PC-3 (cell line): ENCODE measurements at regions of chr4 and their contacts with region 1.

Region 1: DNA sequence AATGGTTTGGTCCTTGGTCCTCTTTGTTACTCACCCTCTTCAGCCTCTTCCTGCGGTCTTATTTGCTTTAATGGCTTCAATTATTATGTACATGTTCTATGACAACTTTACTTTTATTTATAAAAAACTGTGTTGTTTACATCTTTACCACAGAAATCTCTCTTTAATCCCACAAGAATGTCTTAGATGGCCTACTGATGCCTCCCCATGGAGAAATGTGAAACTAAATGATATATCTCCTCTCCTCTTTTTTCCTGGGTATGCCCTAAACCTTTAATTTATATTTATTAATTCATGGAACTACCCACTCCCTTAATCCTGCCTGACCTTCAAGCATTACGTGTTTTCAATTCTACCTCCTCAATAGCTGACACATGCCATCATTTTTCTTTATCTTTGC is 573.2 kb downstream of the CENPC start:
- DNase-seq: peak; percentile 48
- ATAC-seq: peak; percentile 46; the same call in 1 of the 2 replicates
- H3K4me3 ChIP-seq: no peak overlapping the region
- H3K27ac ChIP-seq: no peak overlapping the region
- H3K4me1 ChIP-seq: peaks cover 13% of the 10 kb centered on the region; the same call in 1 of the 2 replicates
- H3K27me3 ChIP-seq: no peaks in the 10 kb centered on the region
- CTCF ChIP-seq: peak; percentile 44

Region 2: GRCh38 chr4:66777097-66777496 is 195.0 kb before region 1 on chr4:
- CTCF ChIA-PET with region 1: no interaction called
- POLR2A ChIA-PET with region 1: no interaction called
- intact Hi-C with region 1: loop called (anchors 2 kb)
- DNase-seq: peak; percentile 49
- ATAC-seq: peak; percentile 46; the same call in 1 of the 2 replicates
- H3K4me3 ChIP-seq: no peak overlapping the region
- H3K27ac ChIP-seq: no peak overlapping the region
- H3K4me1 ChIP-seq: no peaks in the 10 kb centered on the region
- H3K27me3 ChIP-seq: no peaks in the 10 kb centered on the region
- CTCF ChIP-seq: peak; percentile 62

Region 3: DNA sequence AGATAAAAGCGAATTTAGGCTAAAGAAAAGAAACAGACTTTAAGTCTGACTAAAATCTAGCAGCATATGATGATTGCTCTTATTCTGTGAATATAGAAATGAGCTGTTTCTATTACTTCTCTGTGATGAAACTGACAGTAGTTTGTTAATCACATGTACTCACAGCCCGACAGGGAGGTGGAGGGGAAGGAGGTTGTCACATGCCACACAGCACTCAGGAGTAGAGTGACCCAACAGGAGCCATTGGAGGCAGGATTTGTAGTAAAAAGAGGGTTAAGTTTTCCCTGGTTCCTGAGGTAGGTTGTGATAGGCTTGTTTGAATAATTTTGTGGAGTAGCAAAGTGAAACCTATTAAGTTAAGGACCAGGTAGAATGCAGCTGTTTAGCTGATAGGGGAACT is 77.4 kb after region 1 on chr4:
- CTCF ChIA-PET with region 1: no interaction called
- POLR2A ChIA-PET with region 1: no interaction called
- intact Hi-C with region 1: no loop called
- DNase-seq: no peak
- ATAC-seq: no peak
- H3K4me3 ChIP-seq: no peak overlapping the region
- H3K27ac ChIP-seq: no peak overlapping the region
- H3K4me1 ChIP-seq: no peaks in the 10 kb centered on the region
- H3K27me3 ChIP-seq: 0 out of 2 replicates have a peak, but pooled peaks cover 6% of the 10 kb centered on the region
- CTCF ChIP-seq: no peak

Region 4: GRCh38 chr4:67103001-67103747 is 131.1 kb after region 1 on chr4:
- CTCF ChIA-PET with region 1: no interaction called
- POLR2A ChIA-PET with region 1: no interaction called
- intact Hi-C with region 1: no loop called
- DNase-seq: peak; percentile 10
- ATAC-seq: peak; percentile 49; the same call in 1 of the 2 replicates
- H3K4me3 ChIP-seq: no peak overlapping the region
- H3K27ac ChIP-seq: no peak overlapping the region
- H3K4me1 ChIP-seq: no peaks in the 10 kb centered on the region
- H3K27me3 ChIP-seq: peaks cover 5% of the 10 kb centered on the region; the same call in 1 of the 2 replicates
- CTCF ChIP-seq: peak; percentile 37; the same call in 1 of the 2 replicates